ENCODE measurements at regions of chr21 and their contacts with region 1.

Region 1: DNA sequence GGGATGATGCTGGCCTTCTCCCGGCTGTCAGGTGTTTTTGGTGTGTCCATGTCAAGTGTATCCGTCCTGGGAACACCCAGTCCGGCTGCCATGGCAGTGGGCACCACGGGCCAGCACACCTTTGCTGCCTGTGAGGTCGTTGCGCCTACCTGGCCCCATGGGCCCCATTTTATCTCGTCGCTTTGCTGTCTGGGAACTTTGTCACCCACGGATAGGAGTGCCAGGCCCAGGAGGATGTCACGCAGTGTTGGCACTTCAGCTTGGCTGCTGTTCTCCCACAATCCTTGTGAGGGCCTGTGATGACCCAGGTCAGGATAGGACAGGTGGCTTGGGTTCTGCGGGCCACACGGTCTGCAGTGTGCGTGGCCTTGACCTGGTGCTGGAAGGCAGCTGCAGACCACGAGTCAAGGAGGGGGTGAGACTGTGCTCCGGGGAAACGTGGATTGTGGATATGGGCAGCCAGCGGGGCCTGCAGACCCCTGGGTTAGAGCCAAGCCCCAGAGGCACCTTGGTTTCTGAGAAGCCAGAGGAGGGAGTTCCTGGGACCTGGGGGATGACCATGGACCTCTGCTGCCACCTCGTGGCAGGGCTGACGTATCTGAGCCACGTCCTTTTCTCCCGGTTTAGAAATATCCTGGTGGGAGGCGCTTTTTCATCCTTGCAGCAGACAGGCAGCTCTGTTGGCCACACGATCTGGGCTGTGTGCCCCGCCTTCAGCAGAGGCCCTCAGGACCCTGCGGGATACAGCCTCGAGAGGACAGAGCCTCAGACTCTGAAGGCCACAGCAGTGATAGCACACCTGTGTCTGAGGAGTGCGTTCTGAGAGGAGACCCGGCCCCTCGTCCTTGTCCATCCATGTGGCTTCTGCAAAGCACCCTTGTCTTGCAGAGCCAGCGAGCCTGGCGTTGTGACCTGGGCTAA is 161.1 kb upstream of the COL6A1 start:
- DNase-seq: peak; percentile 91
- H3K4me3 ChIP-seq: no peak overlapping the region
- H3K27ac ChIP-seq: no peak overlapping the region
- H3K4me1 ChIP-seq: peaks cover 13% of the 10 kb centered on the region
- H3K27me3 ChIP-seq: no peaks in the 10 kb centered on the region
- CTCF ChIP-seq: peak; percentile 92

Region 2: DNA sequence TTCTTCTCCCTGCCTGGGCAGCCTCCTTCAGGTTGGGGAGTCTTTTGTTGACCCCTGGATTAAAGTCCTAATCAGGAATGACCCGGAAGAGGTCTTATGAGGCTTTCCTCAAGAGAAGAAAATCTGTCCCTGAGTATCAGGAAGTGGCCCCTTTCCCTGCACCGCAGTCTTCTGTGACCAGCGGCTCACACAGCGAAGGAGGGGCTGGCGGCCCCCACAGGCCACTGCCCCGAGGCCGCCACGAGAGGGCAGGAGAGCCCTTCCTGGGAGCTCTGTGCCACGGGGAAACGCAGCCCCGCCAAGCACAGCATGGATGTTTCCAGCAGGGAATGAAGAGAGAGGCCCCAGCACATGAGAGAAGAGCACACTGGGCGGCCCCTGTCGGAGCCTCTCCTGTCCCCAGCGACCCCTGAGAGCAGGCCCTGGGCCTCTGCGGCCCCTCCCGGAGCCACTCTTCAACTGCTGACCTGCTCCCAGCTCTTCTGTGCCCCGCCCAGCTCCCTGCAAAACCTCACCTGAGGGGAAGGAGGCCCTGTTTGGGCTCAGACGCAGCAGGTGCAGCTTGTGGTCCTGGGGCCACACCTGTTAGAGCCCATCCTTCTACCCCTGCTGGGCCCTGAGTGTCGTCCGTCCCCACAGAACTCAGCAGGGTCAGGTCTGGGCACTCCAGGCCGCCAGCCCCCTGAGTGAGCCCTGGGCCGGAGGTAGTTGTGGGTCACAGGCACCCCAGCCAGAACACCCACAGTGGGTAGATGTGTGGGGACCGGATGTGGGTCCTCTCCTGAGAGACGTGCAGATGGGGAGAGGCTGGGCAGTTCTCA is 527.8 kb before region 1 on chr21:
- CTCF ChIA-PET with region 1: no interaction called
- POLR2A ChIA-PET with region 1: no interaction called
- intact Hi-C with region 1: loop called (anchors 2 kb)
- DNase-seq: peak; percentile 89
- H3K4me3 ChIP-seq: no peak overlapping the region
- H3K27ac ChIP-seq: peak overlapping the region; percentile 64
- H3K4me1 ChIP-seq: peaks cover 4% of the 10 kb centered on the region
- H3K27me3 ChIP-seq: no peaks in the 10 kb centered on the region
- CTCF ChIP-seq: peak; percentile 94

Region 3: GRCh38 chr21:45386721-45387371 is 433.6 kb before region 1 on chr21:
- CTCF ChIA-PET with region 1: no interaction called
- POLR2A ChIA-PET with region 1: no interaction called
- intact Hi-C with region 1: no loop called
- DNase-seq: peak; percentile 63
- H3K4me3 ChIP-seq: no peak overlapping the region
- H3K27ac ChIP-seq: no peak overlapping the region
- H3K4me1 ChIP-seq: no peaks in the 10 kb centered on the region
- H3K27me3 ChIP-seq: no peaks in the 10 kb centered on the region
- CTCF ChIP-seq: peak; percentile 34; the same call in 1 of the 2 replicates

Region 4: GRCh38 chr21:45439161-45439872 is 381.1 kb before region 1 on chr21:
- CTCF ChIA-PET with region 1: no interaction called
- POLR2A ChIA-PET with region 1: no interaction called
- intact Hi-C with region 1: loop called (anchors 2 kb)
- DNase-seq: peak; percentile 85
- H3K4me3 ChIP-seq: peak overlapping the region; percentile 40
- H3K27ac ChIP-seq: no peak overlapping the region
- H3K4me1 ChIP-seq: peaks cover 6% of the 10 kb centered on the region
- H3K27me3 ChIP-seq: no peaks in the 10 kb centered on the region
- CTCF ChIP-seq: peak; percentile 94

Region 5: GRCh38 chr21:45554477-45555175 is 265.8 kb before region 1 on chr21:
- CTCF ChIA-PET with region 1: interaction called, 11 read pairs
- POLR2A ChIA-PET with region 1: no interaction called
- intact Hi-C with region 1: loop called (anchors 2 kb)
- DNase-seq: peak; percentile 83
- H3K4me3 ChIP-seq: peak overlapping the region; percentile 83
- H3K27ac ChIP-seq: peak overlapping the region; percentile 51
- H3K4me1 ChIP-seq: no peaks in the 10 kb centered on the region
- H3K27me3 ChIP-seq: no peaks in the 10 kb centered on the region
- CTCF ChIP-seq: peak; percentile 71

Region 6: DNA sequence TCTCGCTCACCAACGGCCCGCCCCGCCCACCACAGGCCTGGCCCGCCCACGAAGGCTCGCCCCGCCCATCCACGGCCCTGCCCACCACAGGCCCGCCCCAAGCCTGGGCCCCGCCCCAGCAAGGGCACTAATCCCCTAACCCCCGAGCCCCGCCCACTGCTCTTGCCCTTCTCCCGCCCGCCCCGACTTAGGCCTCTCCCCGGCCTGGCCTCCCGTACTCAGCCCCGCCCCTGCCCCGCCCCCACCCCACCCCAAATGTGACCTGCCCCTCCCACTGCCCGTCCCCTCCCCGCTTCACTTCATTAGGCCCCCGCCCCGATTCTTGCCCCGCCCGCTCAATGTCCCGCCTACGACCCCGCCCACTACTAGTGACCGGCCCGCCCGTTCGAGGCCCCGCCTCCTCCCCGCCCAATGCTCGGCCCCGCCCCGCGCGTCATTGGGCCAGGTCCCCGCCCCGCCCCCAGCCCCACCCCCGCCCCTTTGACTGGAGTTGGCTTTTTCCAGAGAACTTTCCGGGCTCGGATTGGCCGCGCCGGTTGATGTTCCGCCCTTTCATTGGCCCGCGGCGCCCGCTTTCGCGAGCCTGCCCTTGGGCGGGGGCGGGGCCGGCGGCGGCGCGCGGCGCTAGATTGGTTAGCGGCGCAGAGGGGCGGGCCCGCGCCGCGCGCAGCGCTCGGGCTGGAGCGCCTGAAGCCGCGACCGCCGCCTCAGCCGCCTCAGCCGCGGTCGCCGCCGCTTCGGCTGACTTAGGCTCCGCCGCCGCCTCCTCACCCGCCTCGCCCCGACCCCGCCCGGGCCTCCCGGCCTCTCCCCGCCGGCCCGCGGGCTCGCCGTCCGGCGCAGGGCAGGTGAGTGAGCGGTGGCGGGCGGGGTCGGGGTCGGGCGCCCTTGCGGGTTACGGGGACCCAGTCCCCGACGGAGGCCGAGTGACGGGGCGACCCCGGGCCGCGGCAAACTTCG is 177.1 kb before region 1 on chr21 and contains the start of gene PCBP3:
- CTCF ChIA-PET with region 1: no interaction called
- POLR2A ChIA-PET with region 1: no interaction called
- intact Hi-C with region 1: loop called (anchors 5 kb)
- DNase-seq: peak; percentile 98
- H3K4me3 ChIP-seq: peak within 1 kb of the TSS; percentile 54
- H3K27ac ChIP-seq: peak within 1 kb of the TSS; percentile 80
- H3K4me1 ChIP-seq: peaks cover 37% of the 10 kb centered on the region
- H3K27me3 ChIP-seq: no peaks in the 10 kb centered on the region
- CTCF ChIP-seq: no peak
- total RNA-seq, gene PCBP3: 22.0 and 25.6 TPM in 2 replicates

Region 7: DNA sequence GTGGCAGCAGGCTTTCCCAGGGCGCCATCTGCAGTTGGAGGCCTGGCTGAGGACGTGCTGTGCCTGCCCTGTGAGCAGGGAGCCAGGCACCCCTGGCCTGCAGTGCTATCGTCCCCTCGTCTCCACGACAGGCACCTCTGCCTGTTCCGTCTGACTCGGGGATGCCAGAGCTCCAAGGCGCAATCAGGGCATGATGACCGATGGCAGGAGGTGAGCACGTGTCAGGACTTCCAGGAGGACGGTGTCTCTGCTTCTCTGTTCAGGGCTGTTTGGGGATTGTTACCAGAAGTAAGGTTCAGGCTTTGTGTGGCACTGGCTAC is 51.7 kb before region 1 on chr21:
- CTCF ChIA-PET with region 1: no interaction called
- POLR2A ChIA-PET with region 1: no interaction called
- intact Hi-C with region 1: no loop called
- DNase-seq: peak; percentile 33
- H3K4me3 ChIP-seq: no peak overlapping the region
- H3K27ac ChIP-seq: no peak overlapping the region
- H3K4me1 ChIP-seq: peaks cover 14% of the 10 kb centered on the region
- H3K27me3 ChIP-seq: no peaks in the 10 kb centered on the region
- CTCF ChIP-seq: peak; percentile 49